Activated CD4-positive, alpha-beta T cell treated with anti-CD3 and anti-CD28 coated beads, Interleukin-2, amount 10 ng/mL, durations not matched to agents 24 days and 14 days (primary cell): ENCODE measurements at regions of chr13 and their contacts with region 1.

Region 1: GRCh38 chr13:41652727-41653361 is 195.5 kb downstream of the RGCC start:
- DNase-seq: peak; percentile 78
- H3K4me3 Mint-ChIP-seq: no peak overlapping the region
- H3K27ac Mint-ChIP-seq: no peak overlapping the region
- H3K4me1 Mint-ChIP-seq: peaks cover 11% of the 10 kb centered on the region
- H3K27me3 Mint-ChIP-seq: no peaks in the 10 kb centered on the region

Region 2: GRCh38 chr13:41352935-41353840 is 299.7 kb before region 1 on chr13:
- intact Hi-C with region 1: loop called (anchors 2 kb)
- DNase-seq: peak; percentile 89
- H3K4me3 Mint-ChIP-seq: no peak overlapping the region
- H3K27ac Mint-ChIP-seq: peak overlapping the region; percentile 81
- H3K4me1 Mint-ChIP-seq: peaks cover 34% of the 10 kb centered on the region
- H3K27me3 Mint-ChIP-seq: no peaks in the 10 kb centered on the region

Region 3: DNA sequence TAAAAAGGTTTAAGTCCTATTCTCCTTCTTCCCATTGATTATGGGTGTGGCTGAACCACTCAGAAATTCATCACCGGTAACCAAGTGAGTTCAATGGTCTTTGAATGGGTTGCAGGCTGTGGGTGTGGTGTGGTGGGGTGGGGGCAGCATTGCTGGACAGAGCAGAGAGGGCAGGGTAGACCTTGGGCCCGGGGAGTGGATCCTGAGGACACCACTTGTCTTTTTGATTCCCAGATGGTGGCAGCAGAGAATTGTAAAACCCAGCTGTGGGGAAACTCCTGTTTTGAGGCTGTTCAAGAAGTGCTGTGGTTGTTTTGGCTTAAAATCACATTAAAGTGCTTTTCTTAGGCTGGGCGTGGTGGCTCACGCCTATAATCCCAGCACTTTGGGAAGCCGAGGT is 241.3 kb before region 1 on chr13:
- intact Hi-C with region 1: loop called (anchors 2 kb)
- DNase-seq: peak; percentile 72
- H3K4me3 Mint-ChIP-seq: no peak overlapping the region
- H3K27ac Mint-ChIP-seq: no peak overlapping the region
- H3K4me1 Mint-ChIP-seq: no peaks in the 10 kb centered on the region
- H3K27me3 Mint-ChIP-seq: peaks cover 9% of the 10 kb centered on the region

Region 4: DNA sequence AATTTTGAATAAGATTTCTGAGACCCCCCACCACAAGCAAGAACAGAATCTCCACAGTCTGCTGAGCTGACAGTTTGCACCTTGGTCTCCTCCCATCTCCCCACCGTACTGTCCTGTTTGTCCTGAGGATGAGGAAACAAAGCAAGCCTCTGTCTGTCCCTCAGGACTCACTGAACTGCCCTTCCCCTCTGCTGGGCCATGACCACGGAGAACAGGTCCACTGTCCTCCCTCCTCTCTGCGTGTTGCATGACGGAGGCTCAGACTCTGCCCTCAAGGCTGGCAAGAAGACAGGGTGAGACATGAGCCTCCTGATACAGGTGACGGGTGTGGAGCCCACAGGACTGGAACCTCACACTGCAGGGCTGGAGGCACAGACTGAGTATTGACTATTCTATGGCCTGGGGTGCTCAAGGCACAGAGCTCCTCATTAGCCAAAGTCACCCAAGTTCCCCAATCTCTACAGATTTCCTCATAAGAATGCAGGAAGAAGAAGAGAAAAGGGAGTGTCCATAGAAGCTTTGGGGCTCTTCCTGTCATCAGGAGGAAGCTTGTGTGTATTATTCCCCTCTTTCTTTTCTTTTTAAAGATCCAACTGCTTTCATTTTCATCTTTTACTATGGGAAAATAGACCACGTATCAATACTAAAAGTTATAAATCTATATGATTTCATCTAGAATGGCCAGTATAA is 217.9 kb before region 1 on chr13:
- intact Hi-C with region 1: no loop called
- DNase-seq: no peak
- H3K4me3 Mint-ChIP-seq: no peak overlapping the region
- H3K27ac Mint-ChIP-seq: no peak overlapping the region
- H3K4me1 Mint-ChIP-seq: no peaks in the 10 kb centered on the region
- H3K27me3 Mint-ChIP-seq: no peaks in the 10 kb centered on the region

Region 5: DNA sequence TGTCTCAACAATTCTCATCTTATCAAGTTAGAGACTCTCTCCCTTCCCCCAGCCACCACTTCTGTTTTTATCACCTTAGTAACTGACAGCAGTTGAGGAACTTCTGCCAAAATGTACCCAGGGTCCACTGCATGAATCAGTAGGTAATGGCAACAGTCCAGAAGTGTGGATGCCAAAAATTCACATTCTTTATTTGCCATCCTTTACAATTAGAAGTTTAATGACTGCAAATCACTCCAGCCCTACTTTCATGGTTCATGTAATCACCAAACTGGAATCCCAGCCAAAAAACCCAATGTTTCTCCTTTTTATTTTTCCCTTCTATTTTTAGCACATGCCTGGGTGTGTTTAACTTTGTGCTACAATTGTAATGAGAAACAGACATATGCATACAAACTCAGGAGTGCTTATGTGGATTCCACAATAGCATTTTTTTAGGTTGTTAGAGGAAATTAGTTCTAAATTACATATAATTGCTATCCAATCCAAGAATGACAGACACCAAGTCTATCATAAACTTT is 48.0 kb after region 1 on chr13:
- intact Hi-C with region 1: no loop called
- DNase-seq: no peak
- H3K4me3 Mint-ChIP-seq: no peak overlapping the region
- H3K27ac Mint-ChIP-seq: no peak overlapping the region
- H3K4me1 Mint-ChIP-seq: no peaks in the 10 kb centered on the region
- H3K27me3 Mint-ChIP-seq: no peaks in the 10 kb centered on the region